Caco-2 (cell line): ENCODE measurements at regions of chr7 and their contacts with region 1.

Region 1: DNA sequence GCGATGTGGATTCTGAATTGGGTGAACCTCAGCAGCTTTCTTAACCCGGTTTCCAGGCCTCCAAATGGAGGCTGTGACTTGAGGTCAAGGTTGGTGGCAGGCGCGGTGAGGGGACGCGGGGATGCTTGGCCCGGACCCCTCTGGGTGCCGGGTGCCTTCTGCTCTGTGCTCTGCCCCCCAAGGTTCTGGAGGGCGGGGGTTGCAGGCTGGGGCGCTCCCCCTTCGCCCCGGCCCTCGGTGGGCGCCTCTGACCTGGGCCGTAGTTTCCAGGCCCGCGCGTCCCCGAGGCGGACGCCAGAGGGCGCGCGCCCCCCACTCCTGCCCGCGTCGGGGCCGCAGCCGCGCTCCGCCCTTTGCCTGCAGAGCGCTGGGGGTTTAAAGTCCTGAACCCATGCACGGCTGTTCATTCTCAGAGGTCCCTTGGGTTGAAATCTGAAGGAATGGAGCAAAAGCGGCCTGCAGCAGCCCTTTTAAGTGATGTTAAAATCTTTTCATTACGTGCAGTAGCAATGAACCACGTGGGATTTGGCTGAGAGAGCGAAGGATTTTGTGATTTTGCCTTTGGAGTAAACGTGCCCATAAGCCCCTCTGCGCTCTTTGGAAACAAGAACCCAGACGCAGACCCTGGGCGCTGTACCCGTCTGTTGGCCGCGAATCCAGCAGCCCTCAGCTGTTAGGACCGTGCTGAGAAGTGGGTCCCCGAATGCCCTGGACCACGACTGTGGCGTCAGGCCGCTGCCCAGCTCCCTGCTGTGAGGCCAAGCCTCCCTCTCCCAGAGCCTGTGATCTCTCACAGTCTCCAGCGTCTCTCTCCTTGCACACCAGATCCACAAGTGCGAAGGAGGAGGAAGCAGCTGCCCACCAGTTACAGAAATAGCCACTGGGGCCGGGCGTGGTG is 135.0 kb downstream of the ACTR3B start:
- DNase-seq: peak in 1 of 2 experiments; percentile 61
- H3K4me3 ChIP-seq: no peak overlapping the region
- H3K4me3 Mint-ChIP-seq: no peak overlapping the region
- H3K27ac Mint-ChIP-seq: no peak overlapping the region
- H3K4me1 ChIP-seq: no peaks in the 10 kb centered on the region
- H3K4me1 Mint-ChIP-seq: no peaks in the 10 kb centered on the region
- H3K27me3 ChIP-seq: no peaks in the 10 kb centered on the region
- H3K27me3 Mint-ChIP-seq: peaks cover 19% of the 10 kb centered on the region
- CTCF ChIP-seq: peak; percentile 52 to 85

Region 2: DNA sequence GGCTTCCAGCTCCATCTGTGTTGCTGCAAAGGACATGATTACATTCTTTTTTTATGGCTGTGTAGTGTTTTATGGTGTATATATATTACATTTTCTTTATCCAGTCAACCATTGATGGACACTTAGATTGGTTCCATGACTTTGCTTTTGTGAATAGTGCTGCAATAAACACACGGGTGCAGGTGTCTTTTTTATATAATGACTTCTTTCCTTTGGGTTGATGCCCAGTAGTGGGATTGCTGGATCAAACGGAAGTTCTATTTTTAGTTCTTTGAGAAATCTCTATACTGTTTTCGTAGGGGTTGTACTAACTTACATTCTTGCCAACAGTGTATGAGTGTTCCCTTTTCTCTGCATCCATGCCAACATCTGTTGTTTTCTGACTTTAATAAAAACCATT is 54.7 kb after region 1 on chr7:
- CTCF ChIA-PET with region 1: no interaction called
- POLR2A ChIA-PET with region 1: no interaction called
- intact Hi-C with region 1: no loop called
- DNase-seq: no peak
- H3K4me3 ChIP-seq: no peak overlapping the region
- H3K4me3 Mint-ChIP-seq: no peak overlapping the region
- H3K27ac Mint-ChIP-seq: no peak overlapping the region
- H3K4me1 ChIP-seq: no peaks in the 10 kb centered on the region
- H3K4me1 Mint-ChIP-seq: no peaks in the 10 kb centered on the region
- H3K27me3 ChIP-seq: no peaks in the 10 kb centered on the region
- H3K27me3 Mint-ChIP-seq: peaks cover 10% of the 10 kb centered on the region
- CTCF ChIP-seq: no peak

Region 3: GRCh38 chr7:153090764-153091163 is 196.2 kb after region 1 on chr7:
- CTCF ChIA-PET with region 1: no interaction called
- POLR2A ChIA-PET with region 1: no interaction called
- intact Hi-C with region 1: loop called (anchors 10 kb)
- DNase-seq: no peak
- H3K4me3 ChIP-seq: no peak overlapping the region
- H3K4me3 Mint-ChIP-seq: no peak overlapping the region
- H3K27ac Mint-ChIP-seq: no peak overlapping the region
- H3K4me1 ChIP-seq: no peaks in the 10 kb centered on the region
- H3K4me1 Mint-ChIP-seq: no peaks in the 10 kb centered on the region
- H3K27me3 ChIP-seq: no peaks in the 10 kb centered on the region
- H3K27me3 Mint-ChIP-seq: peaks cover 10% of the 10 kb centered on the region
- CTCF ChIP-seq: no peak

Region 4: DNA sequence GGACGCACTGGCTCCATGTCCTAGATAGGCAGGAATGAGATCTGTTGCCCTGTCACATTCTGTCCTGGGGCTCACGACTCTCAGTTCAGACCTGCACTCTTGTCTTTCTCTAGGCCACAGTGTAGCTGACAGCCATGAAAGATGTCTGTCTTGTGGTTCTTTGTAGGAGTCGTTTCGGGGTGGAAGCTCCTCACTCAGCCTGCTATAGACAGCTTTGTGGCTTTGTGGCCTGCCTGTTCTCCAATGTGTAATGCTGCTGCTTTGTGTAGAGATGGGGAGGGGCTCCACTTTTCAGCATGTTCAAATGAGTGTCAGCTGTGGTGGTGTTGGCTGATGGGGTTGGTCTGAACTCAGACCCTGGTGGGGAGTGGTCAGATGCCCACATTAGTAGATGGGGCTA is 275.8 kb after region 1 on chr7:
- CTCF ChIA-PET with region 1: no interaction called
- POLR2A ChIA-PET with region 1: no interaction called
- intact Hi-C with region 1: no loop called
- DNase-seq: no peak
- H3K4me3 ChIP-seq: no peak overlapping the region
- H3K4me3 Mint-ChIP-seq: no peak overlapping the region
- H3K27ac Mint-ChIP-seq: no peak overlapping the region
- H3K4me1 ChIP-seq: no peaks in the 10 kb centered on the region
- H3K4me1 Mint-ChIP-seq: no peaks in the 10 kb centered on the region
- H3K27me3 ChIP-seq: no peaks in the 10 kb centered on the region
- H3K27me3 Mint-ChIP-seq: no peaks in the 10 kb centered on the region
- CTCF ChIP-seq: no peak